Activated CD4-positive, alpha-beta memory T cell treated with anti-CD3 and anti-CD28 coated beads for 36 hours (primary cell): ENCODE measurements at regions of chr9 and their contacts with region 1.

Region 1: DNA sequence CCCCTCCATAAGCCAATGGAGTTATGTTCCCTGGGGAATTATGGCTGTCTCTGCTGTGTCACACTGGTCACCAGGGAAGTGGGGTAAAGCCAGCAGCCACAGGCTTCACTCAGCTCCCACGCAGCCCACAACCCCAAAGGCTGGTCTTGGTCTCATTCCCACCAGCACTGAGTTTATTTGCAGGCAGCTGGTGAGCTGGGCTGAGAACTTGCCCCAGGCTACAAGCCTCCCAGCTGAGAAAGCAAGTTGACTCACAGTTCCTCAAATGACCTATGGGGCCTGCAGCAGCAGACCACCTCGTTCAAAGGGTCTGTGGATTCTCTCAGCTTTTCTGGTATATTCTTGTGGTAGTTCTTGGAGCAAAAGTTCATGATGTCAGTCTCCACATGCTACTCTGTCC is 468.4 kb downstream of the ELAVL2 start:
- DNase-seq: no peak
- H3K4me3 Mint-ChIP-seq: no peak overlapping the region
- H3K27ac Mint-ChIP-seq: no peak overlapping the region
- H3K4me1 Mint-ChIP-seq: no peaks in the 10 kb centered on the region
- H3K27me3 Mint-ChIP-seq: no peaks in the 10 kb centered on the region

Region 2: DNA sequence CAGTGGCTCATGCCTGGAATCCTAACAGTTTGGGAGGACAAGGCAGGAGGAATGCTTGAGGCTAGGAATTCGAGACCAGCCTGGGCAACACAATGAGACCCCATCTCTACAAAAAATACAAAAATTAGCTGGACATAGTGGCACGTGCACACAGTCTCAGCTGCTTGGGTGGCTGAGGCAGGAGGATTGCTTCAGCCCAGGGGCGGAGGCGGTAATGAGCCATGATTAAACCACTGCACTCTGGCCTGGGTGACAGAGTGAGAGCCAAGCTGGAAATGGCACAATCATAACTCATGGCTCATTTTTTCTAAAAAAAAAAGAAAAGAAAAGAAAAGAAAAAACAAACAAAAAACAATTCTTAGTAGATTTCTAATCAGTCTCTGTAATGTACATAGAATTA is 22.2 kb after region 1 on chr9:
- CTCF ChIA-PET with region 1: interaction called, 3 read pairs
- POLR2A ChIA-PET with region 1: no interaction called
- intact Hi-C with region 1: loop called (anchors 1 kb)
- DNase-seq: no peak
- H3K4me3 Mint-ChIP-seq: no peak overlapping the region
- H3K27ac Mint-ChIP-seq: no peak overlapping the region
- H3K4me1 Mint-ChIP-seq: no peaks in the 10 kb centered on the region
- H3K27me3 Mint-ChIP-seq: no peaks in the 10 kb centered on the region